H1 (cell line): ENCODE measurements at regions of chr2 and their contacts with region 1.

Region 1: GRCh38 chr2:109535217-109535946 is 78.4 kb downstream of the SEPTIN10 start:
- DNase-seq: no peak
- H3K4me3 ChIP-seq: no peak overlapping the region
- H3K27ac ChIP-seq: no peak overlapping the region
- H3K4me1 ChIP-seq: no peaks in the 10 kb centered on the region; a peak in 1 of 7 replicates
- H3K27me3 ChIP-seq: no peaks in the 10 kb centered on the region
- CTCF ChIP-seq: no peak
- EP300 ChIP-seq: no peak
- POLR2A ChIP-seq: no peak
- RAD21 ChIP-seq: no peak

Region 2: DNA sequence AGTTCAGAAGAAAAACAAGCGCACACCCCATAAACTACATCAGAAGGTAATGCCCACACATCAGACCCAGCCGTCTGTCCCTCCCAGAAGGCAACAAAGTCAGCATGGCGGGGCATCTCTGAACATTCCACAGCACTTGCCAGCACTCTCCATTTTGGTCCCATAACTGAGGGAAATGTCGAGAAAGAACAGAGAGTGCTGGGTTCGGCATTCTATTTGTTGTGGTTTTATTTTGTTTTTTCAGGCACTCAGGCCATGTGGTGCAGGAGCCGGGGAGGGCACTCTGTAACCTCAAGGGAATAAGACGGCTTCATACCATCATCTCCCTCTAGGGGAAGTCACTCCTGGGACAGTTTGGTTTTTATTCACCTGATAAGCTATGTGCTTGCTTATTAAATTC is 77.6 kb before region 1 on chr2:
- CTCF ChIA-PET with region 1: no interaction called
- POLR2A ChIA-PET with region 1: no interaction called
- DNase-seq: no peak
- H3K4me3 ChIP-seq: no peak overlapping the region
- H3K27ac ChIP-seq: no peak overlapping the region
- H3K4me1 ChIP-seq: no peaks in the 10 kb centered on the region
- H3K27me3 ChIP-seq: no peaks in the 10 kb centered on the region
- CTCF ChIP-seq: peak in 1 of 3 experiments; percentile 22; a peak in 1 of 4 replicates
- EP300 ChIP-seq: no peak
- POLR2A ChIP-seq: no peak
- RAD21 ChIP-seq: peak in 1 of 2 experiments; percentile 25; a peak in 1 of 4 replicates

Region 3: GRCh38 chr2:109523536-109524361 is 11.6 kb before region 1 on chr2:
- CTCF ChIA-PET with region 1: interaction called, 10 read pairs
- POLR2A ChIA-PET with region 1: interaction called, 3 read pairs
- DNase-seq: no peak
- H3K4me3 ChIP-seq: no peak overlapping the region
- H3K27ac ChIP-seq: no peak overlapping the region
- H3K4me1 ChIP-seq: no peaks in the 10 kb centered on the region
- H3K27me3 ChIP-seq: no peaks in the 10 kb centered on the region
- CTCF ChIP-seq: no peak
- EP300 ChIP-seq: no peak
- POLR2A ChIP-seq: no peak
- RAD21 ChIP-seq: no peak

Region 4: GRCh38 chr2:109555326-109555900 is 20.0 kb after region 1 on chr2:
- CTCF ChIA-PET with region 1: no interaction called
- POLR2A ChIA-PET with region 1: no interaction called
- DNase-seq: no peak
- H3K4me3 ChIP-seq: no peak overlapping the region
- H3K27ac ChIP-seq: no peak overlapping the region
- H3K4me1 ChIP-seq: no peaks in the 10 kb centered on the region
- H3K27me3 ChIP-seq: peaks cover 0 to 1% (median 0%) of the 10 kb centered on the region in 4 experiments; a peak in 1 of 7 replicates
- CTCF ChIP-seq: no peak
- EP300 ChIP-seq: no peak
- POLR2A ChIP-seq: no peak
- RAD21 ChIP-seq: no peak

Region 5: GRCh38 chr2:109647636-109648035 is 112.3 kb after region 1 on chr2:
- CTCF ChIA-PET with region 1: no interaction called
- POLR2A ChIA-PET with region 1: no interaction called
- DNase-seq: no peak
- H3K4me3 ChIP-seq: no peak overlapping the region
- H3K27ac ChIP-seq: no peak overlapping the region
- H3K4me1 ChIP-seq: peaks cover 8 to 15% (median 13%) of the 10 kb centered on the region in 4 experiments; a peak in 6 of 7 replicates
- H3K27me3 ChIP-seq: no peaks in the 10 kb centered on the region
- CTCF ChIP-seq: no peak
- EP300 ChIP-seq: no peak
- POLR2A ChIP-seq: no peak
- RAD21 ChIP-seq: no peak